ENCODE measurements at regions of chr11 and their contacts with region 1.

Region 1: GRCh38 chr11:47847892-47848635 is at the start of gene NUP160:
- DNase-seq: peak; percentile 65 to 72
- ATAC-seq: peak; percentile 76 to 78
- H3K4me3 ChIP-seq: peak within 1 kb of the TSS; percentile 74 to 98 (median 92)
- H3K27ac ChIP-seq: peak within 1 kb of the TSS; percentile 91 to 94 (median 92)
- H3K4me1 ChIP-seq: peaks cover 38 to 42% of the 10 kb centered on the region in 2 donors
- H3K27me3 ChIP-seq: no peaks in the 10 kb centered on the region
- CTCF ChIP-seq: peak in 1 of 5 experiments; percentile 15
- POLR2A ChIP-seq: peak; percentile 64 to 65
- total RNA-seq, gene NUP160: 8.1 to 11.4 (median 9.9) TPM

Region 2: GRCh38 chr11:47373876-47374720 is 474.0 kb before region 1 on chr11:
- in situ Hi-C with region 1: no loop called
- intact Hi-C with region 1: loop called (anchors 10 kb)
- DNase-seq: peak; percentile 46 to 71
- ATAC-seq: peak; percentile 78 to 87
- H3K4me3 ChIP-seq: no peak overlapping the region
- H3K27ac ChIP-seq: peak overlapping the region in 2 of 4 donors; percentile 10 to 37
- H3K4me1 ChIP-seq: peaks cover 0 to 6% of the 10 kb centered on the region in 2 donors
- H3K27me3 ChIP-seq: no peaks in the 10 kb centered on the region
- CTCF ChIP-seq: peak; percentile 90 to 97 (median 93)
- POLR2A ChIP-seq: no peak

Region 3: DNA sequence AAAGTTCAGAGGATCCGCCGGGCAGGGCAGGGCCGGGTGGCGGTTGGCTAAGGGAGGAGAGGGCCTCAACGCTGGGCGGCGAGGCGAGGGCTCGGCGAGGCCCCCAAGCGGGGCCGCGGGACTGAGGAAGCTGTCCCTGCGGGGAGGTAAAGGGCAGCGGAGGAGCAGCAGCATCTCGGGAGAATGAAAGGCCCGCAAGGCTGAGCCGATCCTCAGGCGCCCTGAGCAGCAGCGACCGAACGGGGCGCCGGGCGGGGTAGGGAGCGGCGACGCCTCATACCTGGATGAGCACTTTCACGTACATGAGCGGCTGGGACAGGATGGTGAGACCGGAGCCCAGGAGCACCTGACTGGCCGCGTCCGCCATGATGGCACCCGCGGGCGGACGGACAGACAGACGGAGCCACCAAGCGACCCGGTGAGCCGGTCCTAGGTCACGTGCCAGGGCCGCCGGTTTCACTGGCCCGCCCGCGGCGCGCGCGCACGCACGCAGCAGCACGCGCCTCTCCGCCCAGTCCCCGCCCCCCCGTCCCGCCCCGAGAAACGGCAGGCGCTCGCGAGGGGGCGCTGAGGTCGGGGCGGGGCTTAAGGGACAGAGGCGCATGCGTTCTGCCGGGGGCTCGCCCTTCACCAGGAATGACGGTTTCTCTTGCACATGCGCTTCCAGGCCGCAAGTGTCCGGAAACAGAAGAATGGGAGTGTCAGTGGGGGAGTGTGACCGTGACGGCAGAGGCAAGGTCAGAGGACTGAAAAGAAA is 205.8 kb before region 1 on chr11 and contains the start of gene MTCH2:
- in situ Hi-C with region 1: loop called in 2 of 4 experiments (anchors 10 to 25 kb)
- intact Hi-C with region 1: loop called (anchors 1 kb)
- DNase-seq: peak; percentile 94 to 95
- ATAC-seq: peak; percentile 95 to 96
- H3K4me3 ChIP-seq: peak within 1 kb of the TSS; percentile 70 to 100 (median 88)
- H3K27ac ChIP-seq: peak within 1 kb of the TSS; percentile 89 to 100 (median 99)
- H3K4me1 ChIP-seq: peaks cover 20 to 22% of the 10 kb centered on the region in 2 donors
- H3K27me3 ChIP-seq: no peaks in the 10 kb centered on the region
- CTCF ChIP-seq: peak in 3 of 5 experiments; percentile 35 to 56 (median 49)
- POLR2A ChIP-seq: peak; percentile 86 to 88
- total RNA-seq, gene MTCH2: 70.3 to 139 (median 85.6) TPM

Region 4: DNA sequence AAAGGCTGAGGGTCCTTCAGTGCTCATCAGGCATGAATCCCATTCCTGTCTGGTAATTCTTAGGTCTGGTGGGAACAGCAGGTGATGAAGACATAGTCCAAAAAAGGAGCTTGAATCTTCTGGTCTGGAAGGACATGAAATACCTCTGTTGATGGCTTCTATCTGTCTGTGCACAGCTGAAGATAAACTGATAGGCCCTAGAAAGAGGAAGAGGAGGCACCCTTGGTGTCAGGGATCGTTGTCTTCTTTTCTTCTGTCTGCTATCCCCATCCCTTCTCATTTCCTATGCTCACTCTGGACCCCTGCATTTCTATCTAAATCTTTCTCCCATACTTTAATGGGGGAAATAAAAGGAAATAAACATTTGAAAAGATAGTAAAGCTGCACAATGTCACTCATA is 142.3 kb before region 1 on chr11:
- in situ Hi-C with region 1: no loop called
- intact Hi-C with region 1: no loop called
- DNase-seq: no peak
- ATAC-seq: no peak
- H3K4me3 ChIP-seq: no peak overlapping the region
- H3K27ac ChIP-seq: no peak overlapping the region
- H3K4me1 ChIP-seq: no peaks in the 10 kb centered on the region
- H3K27me3 ChIP-seq: no peaks in the 10 kb centered on the region
- CTCF ChIP-seq: no peak
- POLR2A ChIP-seq: no peak

Region 5: GRCh38 chr11:47766305-47767227 is 81.5 kb before region 1 on chr11:
- in situ Hi-C with region 1: no loop called
- intact Hi-C with region 1: loop called (anchors 1 kb)
- DNase-seq: peak; percentile 64 to 72
- ATAC-seq: peak; percentile 52 to 57
- H3K4me3 ChIP-seq: peak overlapping the region; percentile 70 to 88 (median 75)
- H3K27ac ChIP-seq: peak overlapping the region; percentile 90 to 98 (median 96)
- H3K4me1 ChIP-seq: peaks cover 19 to 22% of the 10 kb centered on the region in 2 donors
- H3K27me3 ChIP-seq: no peaks in the 10 kb centered on the region
- CTCF ChIP-seq: peak in 1 of 5 experiments; percentile 8
- POLR2A ChIP-seq: no peak

Region 6: GRCh38 chr11:47800759-47801158 is 47.3 kb before region 1 on chr11:
- in situ Hi-C with region 1: no loop called
- intact Hi-C with region 1: loop called (anchors 5 kb)
- DNase-seq: no peak
- ATAC-seq: no peak
- H3K4me3 ChIP-seq: no peak overlapping the region
- H3K27ac ChIP-seq: no peak overlapping the region
- H3K4me1 ChIP-seq: no peaks in the 10 kb centered on the region
- H3K27me3 ChIP-seq: no peaks in the 10 kb centered on the region
- CTCF ChIP-seq: no peak
- POLR2A ChIP-seq: no peak

Region 7: DNA sequence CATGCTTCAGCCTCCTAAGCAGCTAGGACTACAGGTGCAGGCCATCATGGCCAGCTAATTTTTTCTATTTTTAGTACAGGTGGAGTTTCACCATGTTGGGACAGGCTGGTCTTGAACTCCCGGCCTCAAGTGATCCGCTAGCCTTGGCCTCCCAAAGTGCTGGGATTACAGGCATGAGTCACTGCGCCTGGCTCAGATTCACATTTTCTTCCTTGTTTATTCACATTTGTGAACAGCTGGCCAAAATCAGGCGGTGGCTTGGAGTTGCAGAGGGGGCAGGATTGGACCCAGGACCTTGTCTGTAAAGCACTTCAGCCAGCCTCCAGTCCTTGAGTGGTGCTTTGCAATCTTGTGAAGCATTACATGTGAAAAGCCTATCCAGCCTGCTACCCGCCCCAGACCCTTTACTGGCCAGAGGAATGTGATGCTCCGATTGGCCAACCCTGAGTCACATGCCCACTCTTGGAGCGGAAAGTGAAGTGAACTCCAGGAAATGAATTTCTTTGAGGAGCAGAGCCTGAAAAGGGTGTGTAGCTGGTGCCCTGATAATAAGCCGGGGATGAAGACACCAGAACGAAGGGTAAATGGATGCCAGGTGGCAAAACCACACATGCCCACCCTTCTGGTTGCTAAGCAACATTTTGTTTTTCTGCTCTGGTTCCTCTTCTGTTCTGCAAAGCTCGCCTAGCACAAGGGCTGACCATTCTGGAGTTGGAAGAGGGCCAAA is 69.7 kb after region 1 on chr11:
- in situ Hi-C with region 1: no loop called
- intact Hi-C with region 1: no loop called
- DNase-seq: peak; percentile 43 to 66
- ATAC-seq: peak; percentile 68 to 83
- H3K4me3 ChIP-seq: no peak overlapping the region
- H3K27ac ChIP-seq: no peak overlapping the region
- H3K4me1 ChIP-seq: no peaks in the 10 kb centered on the region
- H3K27me3 ChIP-seq: no peaks in the 10 kb centered on the region
- CTCF ChIP-seq: no peak
- POLR2A ChIP-seq: no peak